ENCODE measurements at regions of chr9 and their contacts with region 1.

Region 1: DNA sequence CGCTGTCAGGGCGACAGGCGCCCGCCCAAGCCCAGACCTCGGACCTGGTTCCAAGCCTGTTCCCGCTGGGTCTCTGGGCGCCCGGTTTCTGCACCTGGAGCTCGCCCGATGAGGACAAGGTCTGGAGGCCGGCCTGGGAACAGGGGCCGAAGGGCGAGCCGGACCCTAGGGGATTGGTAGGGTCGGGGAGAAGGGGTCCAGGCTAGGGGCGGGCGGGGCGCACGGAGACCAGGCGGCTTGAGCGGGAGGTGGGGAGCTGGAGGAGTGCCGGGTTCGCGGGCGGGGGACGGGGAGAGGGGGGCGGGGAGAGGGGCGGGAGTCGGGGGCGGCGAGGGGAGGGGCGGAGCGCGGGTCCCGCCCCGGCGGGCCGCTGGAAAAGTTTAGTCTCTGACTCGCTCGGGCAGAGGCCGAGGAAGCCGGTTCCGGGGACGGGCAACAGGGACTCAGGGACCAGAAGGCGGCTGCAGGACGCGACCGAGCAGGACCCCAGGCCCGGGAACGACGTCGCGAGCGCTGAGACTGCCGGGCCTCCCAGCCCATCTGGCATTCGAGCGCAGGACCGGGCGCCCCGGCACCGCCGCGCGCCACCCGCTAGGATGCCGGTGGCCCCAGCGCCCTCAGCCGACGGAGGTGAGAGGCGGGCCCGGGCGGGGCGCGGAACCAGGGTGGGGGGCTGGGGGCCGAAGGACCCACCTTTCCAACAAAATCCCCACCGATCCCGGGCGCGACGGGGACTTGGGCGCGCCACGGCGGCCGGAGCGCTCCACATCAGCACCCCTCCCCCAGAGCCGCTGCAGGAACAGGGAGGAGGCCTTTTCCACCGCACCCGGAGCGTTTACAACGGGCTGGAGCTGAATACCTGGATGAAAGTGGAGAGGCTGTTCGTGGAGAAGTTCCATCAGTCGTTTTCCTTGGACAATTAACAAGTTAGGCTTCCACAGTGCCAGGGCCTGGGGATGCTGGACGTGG is at the start of gene S1PR3:
- DNase-seq: peak; percentile 79 to 84 (median 81)
- ATAC-seq: peak; percentile 46 to 92 (median 84)
- H3K4me3 ChIP-seq: peak within 1 kb of the TSS; percentile 53 to 94 (median 72)
- H3K27ac ChIP-seq: peak within 1 kb of the TSS; percentile 0 to 91 (median 76)
- H3K4me1 ChIP-seq: peaks cover 0 to 43% (median 10%) of the 10 kb centered on the region in 12 donors
- H3K27me3 ChIP-seq: peaks cover 0 to 12% (median 5%) of the 10 kb centered on the region in 9 donors
- CTCF ChIP-seq: peak in 6 of 12 donors; percentile 9 to 37 (median 17)
- POLR2A ChIP-seq: peak; percentile 42 to 90
- total RNA-seq, gene S1PR3: 7.4 to 50.3 (median 29.6) TPM

Region 2: DNA sequence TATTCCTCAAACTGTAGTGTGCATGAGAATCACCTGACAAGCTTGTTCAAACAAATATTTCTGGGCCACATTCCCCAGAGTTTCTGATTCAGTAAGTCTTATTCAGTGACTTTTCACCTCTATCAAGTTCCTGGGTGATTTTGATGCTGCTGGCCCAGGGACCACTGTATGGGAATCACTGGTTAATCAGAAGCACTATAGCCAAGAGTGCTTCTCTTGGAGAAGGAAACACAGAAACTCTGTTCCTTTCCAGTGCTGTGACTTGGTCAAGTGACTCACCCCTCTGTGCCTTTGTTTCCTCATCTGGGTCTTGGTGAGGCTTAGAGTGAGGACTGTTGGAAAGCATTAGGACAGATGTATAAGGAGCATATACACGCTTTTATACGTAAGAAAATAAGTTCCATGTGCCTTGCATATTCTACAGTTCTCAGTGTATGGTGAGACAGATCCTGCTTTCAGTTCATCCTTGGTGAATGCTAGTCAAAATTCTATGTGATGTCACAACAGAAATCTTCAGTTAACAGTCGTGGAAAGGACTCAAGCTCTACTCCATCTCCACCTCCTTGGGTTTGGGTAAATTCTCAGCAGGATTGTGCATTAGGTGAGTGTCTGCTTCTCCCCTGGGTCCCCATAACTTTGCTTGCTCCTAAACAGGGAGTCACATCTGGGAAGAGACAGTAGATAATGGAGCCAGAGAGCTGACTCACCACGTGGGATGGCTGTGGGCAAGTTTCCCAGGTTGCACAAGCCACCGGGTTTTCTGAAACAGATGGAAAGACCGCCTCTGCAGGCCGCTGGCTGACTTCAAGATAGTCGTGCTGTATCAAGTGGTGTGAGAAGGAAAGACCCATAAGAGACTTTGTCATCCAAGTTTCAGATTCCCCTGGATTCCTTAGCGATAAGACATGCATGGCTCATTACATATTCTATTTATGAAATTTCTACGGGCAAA is 339.4 kb before region 1 on chr9:
- intact Hi-C with region 1: loop called in 1 of 10 experiments (anchors 10 kb)
- DNase-seq: peak; percentile 79 to 87 (median 83)
- ATAC-seq: peak; percentile 80 to 97 (median 93)
- H3K4me3 ChIP-seq: no peak overlapping the region
- H3K27ac ChIP-seq: peak overlapping the region in 9 of 12 donors; percentile 7 to 71 (median 36)
- H3K4me1 ChIP-seq: peaks cover 0 to 20% (median 4%) of the 10 kb centered on the region in 12 donors
- H3K27me3 ChIP-seq: peaks cover 0 to 3% (median 0%) of the 10 kb centered on the region in 9 donors
- CTCF ChIP-seq: peak in 5 of 12 donors; percentile 7 to 34 (median 20)
- POLR2A ChIP-seq: no peak

Region 3: DNA sequence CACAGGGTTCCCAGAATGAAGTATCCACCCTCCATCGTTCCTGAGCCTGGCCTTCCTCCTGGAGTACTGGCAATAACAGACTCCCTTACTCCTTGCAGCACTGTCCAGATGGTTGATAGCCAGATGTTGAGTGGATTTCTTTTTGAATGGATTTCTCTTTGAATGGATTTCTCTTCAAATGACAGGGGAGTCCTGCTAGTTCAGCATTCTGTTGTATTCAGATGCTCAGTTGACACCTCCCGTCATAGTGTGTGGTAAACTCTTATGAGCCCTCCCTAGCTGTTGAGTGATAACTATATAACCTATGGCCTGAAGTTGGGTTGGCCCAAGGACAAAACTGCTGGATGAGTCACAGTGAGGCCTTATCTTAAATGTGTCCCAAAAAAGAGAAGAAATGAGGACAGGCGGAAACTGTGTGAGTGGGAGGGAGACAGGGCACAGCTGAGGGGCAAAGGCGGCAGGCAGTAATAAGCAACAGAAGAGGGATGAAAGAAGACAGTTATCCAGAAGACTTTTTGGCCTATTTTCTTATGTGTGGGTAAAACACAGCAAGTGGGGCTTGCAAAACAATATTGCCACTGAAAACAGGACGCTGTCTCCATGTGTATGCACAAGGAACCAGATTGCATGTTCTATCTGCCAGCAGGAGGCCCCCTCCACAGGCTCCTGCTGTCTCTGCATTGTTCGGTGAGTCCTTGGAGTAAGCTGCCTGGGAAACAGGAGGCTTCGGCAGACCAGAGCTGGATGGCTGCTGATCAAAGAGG is 209.5 kb before region 1 on chr9:
- intact Hi-C with region 1: loop called in 8 of 10 experiments (anchors 5 to 10 kb)
- DNase-seq: peak in 4 of 5 donors; percentile 45 to 69 (median 60)
- ATAC-seq: peak; percentile 59 to 84 (median 79)
- H3K4me3 ChIP-seq: no peak overlapping the region
- H3K27ac ChIP-seq: peak overlapping the region; percentile 1 to 72 (median 52)
- H3K4me1 ChIP-seq: peaks cover 0 to 43% (median 27%) of the 10 kb centered on the region in 12 donors
- H3K27me3 ChIP-seq: no peaks in the 10 kb centered on the region
- CTCF ChIP-seq: peak; percentile 23 to 66 (median 49)
- POLR2A ChIP-seq: no peak

Region 4: GRCh38 chr9:88814577-88814976 is 176.8 kb before region 1 on chr9:
- intact Hi-C with region 1: loop called in 1 of 10 experiments (anchors 10 kb)
- DNase-seq: peak; percentile 71 to 89 (median 74)
- ATAC-seq: peak; percentile 80 to 97 (median 96)
- H3K4me3 ChIP-seq: no peak overlapping the region
- H3K27ac ChIP-seq: peak overlapping the region; percentile 41 to 92 (median 76)
- H3K4me1 ChIP-seq: peaks cover 0 to 40% (median 16%) of the 10 kb centered on the region in 12 donors
- H3K27me3 ChIP-seq: peaks cover 0 to 17% (median 0%) of the 10 kb centered on the region in 9 donors
- CTCF ChIP-seq: no peak
- POLR2A ChIP-seq: no peak

Region 5: DNA sequence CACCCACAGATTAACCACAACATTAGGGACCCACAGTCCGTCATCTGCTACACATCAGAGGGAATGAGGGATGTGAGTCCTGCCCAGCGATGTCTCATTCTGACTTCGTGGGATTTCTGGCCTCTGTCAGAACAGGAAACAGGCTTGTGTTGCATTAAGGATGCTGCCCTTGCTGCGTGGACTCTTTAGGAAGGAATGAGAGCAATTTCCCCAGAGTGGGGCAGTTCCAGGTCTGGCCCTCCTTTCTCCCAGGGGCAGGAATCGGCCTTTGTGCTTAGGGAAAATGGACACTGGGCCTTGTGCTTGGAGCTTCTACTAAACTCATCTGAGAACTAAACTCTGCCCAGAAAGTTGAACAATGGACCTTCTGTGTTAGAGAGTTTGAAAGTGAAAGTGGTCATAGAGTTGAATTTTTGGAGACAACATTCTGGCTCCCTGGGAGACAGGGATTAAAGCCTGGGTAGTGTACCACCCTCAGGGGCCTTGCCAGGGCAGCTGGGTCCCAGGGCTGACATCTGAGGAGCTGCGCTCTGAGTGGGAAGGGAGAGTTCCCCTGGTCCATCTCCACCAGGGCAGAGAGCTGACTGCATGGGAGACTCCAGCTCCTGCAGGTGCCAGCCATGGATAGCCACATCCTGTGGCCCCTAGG is 37.8 kb before region 1 on chr9:
- intact Hi-C with region 1: loop called in 2 of 10 experiments (anchors 5 kb)
- DNase-seq: peak in 1 of 5 donors; percentile 37
- ATAC-seq: peak in 3 of 4 donors; percentile 4 to 26 (median 17)
- H3K4me3 ChIP-seq: no peak overlapping the region
- H3K27ac ChIP-seq: peak overlapping the region in 10 of 12 donors; percentile 12 to 72 (median 52)
- H3K4me1 ChIP-seq: peaks cover 4 to 51% (median 33%) of the 10 kb centered on the region in 12 donors
- H3K27me3 ChIP-seq: peaks cover 0 to 9% (median 0%) of the 10 kb centered on the region in 9 donors
- CTCF ChIP-seq: no peak
- POLR2A ChIP-seq: no peak